ENCODE measurements at regions of chr13 and their contacts with region 1.

Region 1: GRCh38 chr13:49690992-49691886 is at the start of gene EBPL:
- DNase-seq: peak; percentile 83
- H3K4me3 Mint-ChIP-seq: peak within 1 kb of the TSS; percentile 92
- H3K27ac Mint-ChIP-seq: peak within 1 kb of the TSS; percentile 77
- H3K4me1 Mint-ChIP-seq: peaks cover 34% of the 10 kb centered on the region
- H3K27me3 Mint-ChIP-seq: no peaks in the 10 kb centered on the region
- total RNA-seq, gene EBPL: 42.6 and 44.6 TPM in 2 replicates

Region 2: DNA sequence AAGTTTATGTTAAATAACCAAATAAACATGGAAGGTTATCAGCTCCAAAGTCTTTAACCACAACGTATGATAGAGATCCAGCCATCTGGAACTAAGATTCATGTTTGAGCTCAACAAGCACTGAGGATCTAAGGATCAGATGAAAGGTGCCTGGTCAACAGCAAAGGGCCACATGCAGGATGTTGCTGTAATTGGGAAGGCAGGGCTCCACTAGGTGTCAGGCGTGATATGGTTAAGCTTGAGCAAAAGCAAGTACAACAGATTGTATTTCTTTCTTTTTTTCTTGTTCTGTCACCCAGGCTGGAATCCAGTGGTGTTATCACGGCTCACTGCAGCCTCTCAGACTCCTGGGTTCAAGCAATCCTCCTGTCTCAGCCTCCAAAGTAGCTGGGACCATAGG is 12.0 kb before region 1 on chr13:
- intact Hi-C with region 1: loop called (anchors 1 kb)
- DNase-seq: no peak
- H3K4me3 Mint-ChIP-seq: no peak overlapping the region
- H3K27ac Mint-ChIP-seq: no peak overlapping the region
- H3K4me1 Mint-ChIP-seq: peaks cover 20% of the 10 kb centered on the region
- H3K27me3 Mint-ChIP-seq: no peaks in the 10 kb centered on the region

Region 3: GRCh38 chr13:49731766-49732165 is 40.5 kb after region 1 on chr13:
- intact Hi-C with region 1: no loop called
- DNase-seq: no peak
- H3K4me3 Mint-ChIP-seq: no peak overlapping the region
- H3K27ac Mint-ChIP-seq: no peak overlapping the region
- H3K4me1 Mint-ChIP-seq: no peaks in the 10 kb centered on the region
- H3K27me3 Mint-ChIP-seq: no peaks in the 10 kb centered on the region

Region 4: DNA sequence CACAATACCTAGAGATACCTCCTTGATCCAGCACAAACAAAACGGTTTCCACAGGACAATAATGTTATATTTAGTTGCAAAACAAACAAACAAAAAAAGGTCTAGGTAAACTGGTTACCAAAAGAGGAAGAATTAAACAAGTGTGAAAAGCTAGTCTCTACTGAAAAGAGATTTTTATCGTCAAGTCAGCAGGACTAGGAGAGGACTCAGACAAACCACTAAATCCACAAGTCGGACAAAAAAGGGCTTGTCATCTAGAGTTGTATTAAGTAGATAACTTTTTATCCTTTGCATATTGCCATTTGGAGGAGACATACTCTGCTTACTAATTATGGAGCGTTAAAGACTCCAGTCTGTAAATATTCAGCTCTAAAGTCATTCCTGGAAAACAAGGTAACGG is 111.2 kb after region 1 on chr13:
- intact Hi-C with region 1: no loop called
- DNase-seq: no peak
- H3K4me3 Mint-ChIP-seq: no peak overlapping the region
- H3K27ac Mint-ChIP-seq: no peak overlapping the region
- H3K4me1 Mint-ChIP-seq: no peaks in the 10 kb centered on the region
- H3K27me3 Mint-ChIP-seq: peaks cover 8% of the 10 kb centered on the region

Region 5: GRCh38 chr13:49936085-49936940 is 245.1 kb after region 1 on chr13 and contains the start of gene SPRYD7:
- intact Hi-C with region 1: loop called (anchors 2 kb)
- DNase-seq: peak; percentile 92
- H3K4me3 Mint-ChIP-seq: peak within 1 kb of the TSS; percentile 94
- H3K27ac Mint-ChIP-seq: peak within 1 kb of the TSS; percentile 87
- H3K4me1 Mint-ChIP-seq: peaks cover 11% of the 10 kb centered on the region
- H3K27me3 Mint-ChIP-seq: peaks cover 22% of the 10 kb centered on the region
- total RNA-seq, gene SPRYD7: 6.9 and 7.0 TPM in 2 replicates